ENCODE measurements at regions of chr7 and their contacts with region 1.

Region 1: GRCh38 chr7:80918909-80919662 is at the start of gene SEMA3C:
- DNase-seq: peak; percentile 87
- H3K4me3 ChIP-seq: peak within 1 kb of the TSS; percentile 69
- H3K27ac ChIP-seq: peak within 1 kb of the TSS; percentile 43
- H3K27me3 ChIP-seq: no peaks in the 10 kb centered on the region
- CTCF ChIP-seq: peak; percentile 13; the same call in 1 of the 2 replicates
- polyA plus RNA-seq, gene SEMA3C: 35.9 and 39.9 TPM in 2 replicates

Region 2: DNA sequence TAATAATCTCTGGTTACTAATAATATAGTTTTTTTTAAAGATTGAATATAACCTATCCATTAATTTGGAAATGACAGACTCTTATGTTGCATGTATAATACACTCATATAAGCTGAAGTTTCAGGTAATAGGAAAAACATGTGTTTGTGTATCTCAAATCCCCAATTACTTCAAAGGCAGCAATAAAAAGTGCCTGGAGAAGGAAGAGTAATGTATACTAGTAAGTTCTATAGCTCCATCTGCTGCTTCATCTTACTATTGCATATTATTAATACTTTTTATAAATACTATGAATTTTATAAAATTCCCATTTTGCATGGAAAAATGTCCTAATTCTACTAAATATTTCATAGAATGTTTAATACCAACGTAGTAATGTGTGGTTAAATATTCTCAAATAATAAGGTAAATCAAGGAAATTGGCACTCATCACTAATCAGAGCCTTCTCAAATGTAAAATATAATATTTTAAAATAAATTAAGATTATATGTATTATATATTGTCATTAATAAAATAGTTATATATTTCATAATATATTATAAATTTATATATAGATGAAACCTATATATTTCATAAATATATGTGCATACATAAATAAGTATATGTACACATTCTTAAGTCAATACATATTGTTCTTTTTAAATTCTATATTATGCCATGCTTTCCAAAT is 538.9 kb after region 1 on chr7:
- CTCF ChIA-PET with region 1: interaction called, 24 read pairs
- POLR2A ChIA-PET with region 1: no interaction called
- DNase-seq: no peak
- H3K4me3 ChIP-seq: no peak overlapping the region
- H3K27ac ChIP-seq: no peak overlapping the region
- H3K27me3 ChIP-seq: no peaks in the 10 kb centered on the region
- CTCF ChIP-seq: peak; percentile 58

Region 3: DNA sequence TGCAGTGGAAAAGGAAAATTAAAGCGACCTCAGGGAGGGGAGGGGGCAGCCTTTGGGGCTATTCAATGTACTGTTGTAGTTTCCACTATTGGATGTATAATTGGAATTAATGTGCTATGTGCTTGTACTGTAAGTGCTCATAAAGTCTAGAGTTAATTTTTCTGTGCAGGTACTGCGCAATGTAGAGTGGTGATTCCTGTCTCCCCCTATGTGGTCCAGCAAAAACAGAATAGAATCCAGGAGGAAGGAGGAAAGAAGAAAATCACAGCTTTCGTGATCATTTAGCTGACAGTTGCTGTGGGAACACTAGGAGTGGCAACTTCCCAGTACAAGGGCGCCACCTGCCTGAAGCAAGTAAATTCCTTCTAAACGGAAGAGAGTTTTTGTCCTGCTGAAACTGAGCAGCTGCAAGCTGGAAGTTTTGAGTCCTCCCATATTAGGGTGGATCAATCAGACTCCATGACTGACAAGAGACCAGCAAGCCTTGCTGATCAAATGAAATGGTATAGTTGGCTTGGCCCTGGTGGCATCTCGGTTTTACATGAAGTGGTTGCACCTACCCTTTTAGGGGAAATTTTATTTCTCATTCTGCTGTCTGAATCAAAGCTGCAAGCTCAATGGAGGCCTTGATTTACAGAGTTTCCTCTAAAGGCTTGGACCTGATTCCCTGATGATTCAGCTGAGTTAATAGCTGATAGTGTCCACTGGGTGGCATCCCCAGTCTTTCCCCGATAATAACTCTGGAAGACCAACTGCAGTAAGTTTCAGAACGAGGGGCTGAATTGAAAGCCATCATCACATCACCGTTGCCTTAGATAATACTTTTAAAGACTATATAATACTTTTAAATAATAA is 551.0 kb after region 1 on chr7:
- CTCF ChIA-PET with region 1: interaction called, 44 read pairs
- POLR2A ChIA-PET with region 1: interaction called, 3 read pairs
- DNase-seq: peak; percentile 58
- H3K4me3 ChIP-seq: no peak overlapping the region
- H3K27ac ChIP-seq: no peak overlapping the region
- H3K27me3 ChIP-seq: no peaks in the 10 kb centered on the region
- CTCF ChIP-seq: peak; percentile 79

Measured in AG04450 (cell line).